Activated B cell treated with CpG ODN at 0.5 μM for 24 hours (primary cell): ENCODE measurements at regions of chr6 and their contacts with region 1.

Region 1: DNA sequence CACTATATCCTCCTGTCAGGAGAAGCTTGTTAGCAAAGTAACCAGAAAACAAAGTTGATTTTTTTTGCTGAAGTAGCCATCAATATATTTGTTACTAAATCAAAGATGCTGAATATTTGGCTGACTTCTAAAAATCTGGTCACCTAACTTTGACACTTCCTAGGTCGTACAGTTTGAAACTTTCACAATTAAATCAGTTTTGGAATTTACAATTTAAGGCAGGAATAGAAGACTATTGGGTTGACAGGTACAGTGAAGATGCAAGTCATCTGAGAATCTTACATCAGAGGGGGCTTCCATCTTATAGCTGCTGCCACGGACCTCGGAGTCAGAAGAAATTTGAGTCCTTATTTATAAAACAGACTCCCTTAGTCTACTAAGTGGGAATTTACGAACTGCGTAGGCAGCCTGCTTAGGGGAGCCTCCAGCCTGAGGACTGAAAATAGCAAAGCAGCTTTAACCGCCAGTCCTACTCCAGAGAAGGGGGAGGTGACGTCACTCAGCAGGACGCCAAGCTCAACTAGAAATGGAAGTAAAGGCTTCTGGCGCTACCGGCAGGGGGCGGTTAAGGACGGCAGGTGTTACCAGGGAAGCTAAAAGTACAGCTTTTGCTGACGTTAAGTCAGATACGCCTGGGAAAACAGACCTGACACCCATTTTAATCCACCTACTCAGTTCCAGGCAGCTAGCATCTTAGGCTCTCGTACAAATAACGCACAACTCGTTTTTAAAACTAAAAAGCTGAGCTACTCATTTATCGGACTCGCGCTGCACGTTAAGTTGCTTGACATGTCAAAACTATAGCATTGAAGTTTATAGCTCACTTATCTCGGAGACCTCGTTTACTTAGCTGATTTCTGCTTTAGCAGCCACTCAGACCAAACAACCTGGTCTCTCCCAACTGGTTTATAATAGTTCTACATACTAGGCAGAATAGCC is 61.1 kb upstream of the HFE start:
- DNase-seq: peak; percentile 76
- ATAC-seq: peak; percentile 39
- H3K4me3 Mint-ChIP-seq: peak overlapping the region; percentile 96
- H3K27ac Mint-ChIP-seq: peak overlapping the region; percentile 99
- H3K4me1 Mint-ChIP-seq: peaks cover 35% of the 10 kb centered on the region
- H3K27me3 Mint-ChIP-seq: peaks cover 2% of the 10 kb centered on the region
- CTCF ChIP-seq: no peak

Region 2: GRCh38 chr6:25922301-25922700 is 103.9 kb before region 1 on chr6:
- CTCF ChIA-PET with region 1: no interaction called
- POLR2A ChIA-PET with region 1: no interaction called
- intact Hi-C with region 1: no loop called
- DNase-seq: no peak
- ATAC-seq: no peak
- H3K4me3 Mint-ChIP-seq: no peak overlapping the region
- H3K27ac Mint-ChIP-seq: no peak overlapping the region
- H3K4me1 Mint-ChIP-seq: no peaks in the 10 kb centered on the region
- H3K27me3 Mint-ChIP-seq: peaks cover 5% of the 10 kb centered on the region
- CTCF ChIP-seq: no peak

Region 3: DNA sequence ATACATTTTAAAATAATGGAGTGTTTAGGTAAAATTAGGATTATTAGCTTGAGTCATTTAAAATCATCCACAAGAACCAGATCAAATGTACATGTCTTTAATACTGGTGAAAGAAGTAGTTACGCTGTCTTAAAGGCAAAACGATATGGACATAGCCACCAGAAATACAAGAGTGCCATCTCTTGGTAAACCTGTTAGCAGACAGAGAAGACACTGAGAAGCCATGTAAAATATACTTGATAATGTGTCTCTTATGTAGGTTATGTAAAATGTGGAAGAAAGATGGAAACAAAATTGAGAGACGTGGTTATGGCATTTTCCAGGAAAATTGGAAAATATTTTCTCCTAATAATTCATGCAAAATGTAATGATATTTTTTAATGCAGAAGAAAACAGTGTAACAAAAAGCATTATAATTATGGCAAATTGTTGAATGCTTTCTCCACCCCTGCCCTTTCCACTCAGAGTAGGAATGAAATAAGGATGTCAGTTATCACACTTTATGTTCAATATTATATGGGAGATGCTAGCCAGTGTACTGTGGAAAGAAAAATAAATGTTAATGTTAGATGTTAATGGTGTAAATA is 83.5 kb before region 1 on chr6:
- CTCF ChIA-PET with region 1: no interaction called
- POLR2A ChIA-PET with region 1: no interaction called
- intact Hi-C with region 1: no loop called
- DNase-seq: no peak
- ATAC-seq: peak; percentile 60
- H3K4me3 Mint-ChIP-seq: no peak overlapping the region
- H3K27ac Mint-ChIP-seq: no peak overlapping the region
- H3K4me1 Mint-ChIP-seq: peaks cover 16% of the 10 kb centered on the region
- H3K27me3 Mint-ChIP-seq: peaks cover 6% of the 10 kb centered on the region
- CTCF ChIP-seq: no peak

Region 4: GRCh38 chr6:25992413-25993037 is 33.6 kb before region 1 on chr6:
- CTCF ChIA-PET with region 1: interaction called, 44 read pairs
- POLR2A ChIA-PET with region 1: interaction called, 147 read pairs
- intact Hi-C with region 1: loop called (anchors 1 kb)
- DNase-seq: peak; percentile 99
- ATAC-seq: peak; percentile 89
- H3K4me3 Mint-ChIP-seq: peak overlapping the region; percentile 99
- H3K27ac Mint-ChIP-seq: peak overlapping the region; percentile 99
- H3K4me1 Mint-ChIP-seq: peaks cover 50% of the 10 kb centered on the region
- H3K27me3 Mint-ChIP-seq: no peaks in the 10 kb centered on the region
- CTCF ChIP-seq: peak; percentile 73

Region 5: GRCh38 chr6:26054857-26055669 is 28.9 kb after region 1 on chr6:
- CTCF ChIA-PET with region 1: interaction called, 7 read pairs
- POLR2A ChIA-PET with region 1: interaction called, 104 read pairs
- intact Hi-C with region 1: loop called (anchors 1 kb)
- DNase-seq: peak; percentile 63
- ATAC-seq: peak; percentile 65
- H3K4me3 Mint-ChIP-seq: peak overlapping the region; percentile 97
- H3K27ac Mint-ChIP-seq: peak overlapping the region; percentile 100
- H3K4me1 Mint-ChIP-seq: peaks cover 20% of the 10 kb centered on the region
- H3K27me3 Mint-ChIP-seq: no peaks in the 10 kb centered on the region
- CTCF ChIP-seq: no peak

Region 6: DNA sequence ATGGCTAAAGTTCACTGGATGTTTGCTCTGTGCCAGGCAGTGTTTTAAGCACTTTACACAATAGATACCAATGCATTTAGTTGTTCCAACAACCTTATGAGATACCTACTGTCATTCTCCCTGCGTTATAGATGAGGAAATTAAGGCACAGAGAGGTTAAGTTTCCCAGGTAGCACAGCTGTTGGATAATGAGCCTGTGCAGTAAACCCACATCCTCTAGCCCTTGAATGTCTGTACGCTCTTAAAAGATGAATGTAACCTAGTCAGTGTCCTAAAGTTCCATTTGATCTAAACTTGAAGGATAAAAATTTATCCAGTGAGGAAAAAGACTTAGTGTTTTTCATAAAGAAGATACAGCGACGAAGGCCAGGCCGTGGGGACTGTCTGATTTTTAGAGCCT is 89.1 kb after region 1 on chr6:
- CTCF ChIA-PET with region 1: no interaction called
- POLR2A ChIA-PET with region 1: no interaction called
- intact Hi-C with region 1: no loop called
- DNase-seq: no peak
- ATAC-seq: no peak
- H3K4me3 Mint-ChIP-seq: no peak overlapping the region
- H3K27ac Mint-ChIP-seq: no peak overlapping the region
- H3K4me1 Mint-ChIP-seq: no peaks in the 10 kb centered on the region
- H3K27me3 Mint-ChIP-seq: no peaks in the 10 kb centered on the region
- CTCF ChIP-seq: no peak

Region 7: DNA sequence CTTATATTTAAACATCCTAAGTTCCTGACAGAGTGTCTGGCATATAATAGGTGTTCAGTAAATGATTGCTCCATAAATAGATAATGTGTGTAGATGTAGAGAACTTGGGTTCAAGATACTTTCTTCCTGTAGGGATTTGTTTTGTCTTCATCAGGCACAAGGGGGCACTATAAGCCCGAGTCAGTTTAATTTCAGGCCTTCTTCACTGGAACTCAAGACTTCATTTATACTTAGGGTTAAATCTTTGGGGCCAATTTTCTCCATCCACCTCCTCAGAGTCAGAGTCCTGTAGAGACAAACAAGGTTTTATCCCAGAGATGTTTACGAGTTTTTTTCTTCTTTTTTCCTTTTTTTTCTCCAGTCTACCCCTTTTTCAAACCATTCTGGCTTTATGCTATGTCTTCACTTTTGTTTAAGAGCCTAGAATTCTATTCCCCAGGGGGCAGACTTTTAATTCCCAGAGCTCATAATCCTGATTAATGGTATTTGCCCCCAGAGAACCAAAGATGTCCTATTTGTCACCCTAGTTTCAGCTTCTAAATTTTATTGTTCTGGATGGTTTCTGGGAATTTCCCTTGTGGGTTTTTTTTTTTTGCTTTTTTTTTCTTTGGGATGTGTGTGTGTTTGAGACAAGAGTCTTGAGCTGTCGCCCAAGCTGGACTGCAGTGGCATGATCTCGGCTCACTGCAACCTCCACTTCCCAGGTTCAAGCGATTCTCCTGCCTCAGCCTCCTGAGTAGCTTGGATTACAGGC is 149.4 kb after region 1 on chr6:
- CTCF ChIA-PET with region 1: no interaction called
- POLR2A ChIA-PET with region 1: interaction called, 10 read pairs
- intact Hi-C with region 1: no loop called
- DNase-seq: no peak
- ATAC-seq: no peak
- H3K4me3 Mint-ChIP-seq: no peak overlapping the region
- H3K27ac Mint-ChIP-seq: peak overlapping the region; percentile 65
- H3K4me1 Mint-ChIP-seq: peaks cover 38% of the 10 kb centered on the region
- H3K27me3 Mint-ChIP-seq: no peaks in the 10 kb centered on the region
- CTCF ChIP-seq: no peak

Region 8: GRCh38 chr6:27132532-27133280 is 1106.5 kb after region 1 on chr6:
- CTCF ChIA-PET with region 1: no interaction called
- POLR2A ChIA-PET with region 1: interaction called, 17 read pairs
- intact Hi-C with region 1: loop called (anchors 2 kb)
- DNase-seq: peak; percentile 77
- ATAC-seq: peak; percentile 84
- H3K4me3 Mint-ChIP-seq: no peak overlapping the region
- H3K27ac Mint-ChIP-seq: no peak overlapping the region
- H3K4me1 Mint-ChIP-seq: peaks cover 14% of the 10 kb centered on the region
- H3K27me3 Mint-ChIP-seq: no peaks in the 10 kb centered on the region
- CTCF ChIP-seq: no peak

Region 9: GRCh38 chr6:27825025-27825793 is 1799.0 kb after region 1 on chr6:
- CTCF ChIA-PET with region 1: no interaction called
- POLR2A ChIA-PET with region 1: interaction called, 10 read pairs
- intact Hi-C with region 1: loop called (anchors 10 kb)
- DNase-seq: no peak
- ATAC-seq: no peak
- H3K4me3 Mint-ChIP-seq: peak overlapping the region; percentile 96
- H3K27ac Mint-ChIP-seq: peak overlapping the region; percentile 99
- H3K4me1 Mint-ChIP-seq: peaks cover 31% of the 10 kb centered on the region
- H3K27me3 Mint-ChIP-seq: no peaks in the 10 kb centered on the region
- CTCF ChIP-seq: no peak